ENCODE measurements at regions of chr1 and their contacts with region 1.

Region 1: GRCh38 chr1:220786337-220787068 is at the start of gene MTARC1:
- DNase-seq: peak; percentile 86
- ATAC-seq: peak; percentile 93
- H3K4me3 ChIP-seq: peak within 1 kb of the TSS; percentile 60 to 79 (median 64)
- H3K27ac ChIP-seq: peak within 1 kb of the TSS; percentile 96
- H3K4me1 ChIP-seq: peaks cover 40% of the 10 kb centered on the region
- H3K27me3 ChIP-seq: no peaks in the 10 kb centered on the region
- CTCF ChIP-seq: peak; percentile 33; the same call in 1 of the 2 replicates
- EP300 ChIP-seq: no peak
- POLR2A ChIP-seq: peak; percentile 56 to 86
- RAD21 ChIP-seq: peak; percentile 12; the same call in 1 of the 2 replicates
- total RNA-seq, gene MTARC1: 64.2 and 106 TPM in 2 replicates

Region 2: GRCh38 chr1:220272047-220272840 is 514.3 kb before region 1 on chr1 and contains the start of gene RAB3GAP2:
- CTCF ChIA-PET with region 1: no interaction called
- POLR2A ChIA-PET with region 1: no interaction called
- in situ Hi-C with region 1: loop called (anchors 10 kb)
- intact Hi-C with region 1: no loop called
- DNase-seq: peak; percentile 88
- ATAC-seq: peak; percentile 97
- H3K4me3 ChIP-seq: peak within 1 kb of the TSS; percentile 86 to 99 (median 96)
- H3K27ac ChIP-seq: peak within 1 kb of the TSS; percentile 78
- H3K4me1 ChIP-seq: peaks cover 35% of the 10 kb centered on the region
- H3K27me3 ChIP-seq: peaks cover 0 to 4% of the 10 kb centered on the region in 2 experiments; a peak in 2 of 5 replicates
- CTCF ChIP-seq: peak; percentile 8; the same call in 1 of the 2 replicates
- EP300 ChIP-seq: no peak
- POLR2A ChIP-seq: peak; percentile 88 to 91
- RAD21 ChIP-seq: 0 out of 2 replicates have a peak, but pooled peaks have one; percentile 18
- total RNA-seq, gene RAB3GAP2: 25.0 and 34.2 TPM in 2 replicates

Region 3: DNA sequence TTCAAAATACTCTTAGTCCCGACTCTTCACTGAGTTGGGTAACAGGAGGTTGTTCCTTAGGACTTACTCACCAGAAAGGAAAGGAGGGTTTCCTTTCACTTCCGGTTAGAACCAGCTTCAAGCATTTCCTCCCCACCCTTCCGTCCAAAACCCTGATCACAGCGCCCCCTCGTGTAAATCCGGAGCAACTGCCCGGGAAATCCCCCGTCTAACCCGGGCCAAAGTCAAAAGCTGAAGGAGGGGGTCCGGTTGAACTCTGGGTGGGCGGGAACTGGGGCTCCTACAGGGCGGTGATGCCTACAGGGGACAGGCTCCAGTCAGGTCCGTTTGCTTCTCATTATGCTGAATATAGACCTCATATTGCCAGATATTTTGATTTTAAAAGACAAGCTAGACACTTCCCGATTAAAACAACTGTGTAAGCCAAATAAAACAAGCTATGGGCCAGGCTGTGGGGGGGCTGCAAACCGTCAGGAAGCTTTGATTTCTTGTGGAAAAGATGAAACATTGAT is 53.4 kb before region 1 on chr1:
- CTCF ChIA-PET with region 1: no interaction called
- POLR2A ChIA-PET with region 1: interaction called, 14 read pairs
- in situ Hi-C with region 1: no loop called
- intact Hi-C with region 1: no loop called
- DNase-seq: peak; percentile 77
- ATAC-seq: peak; percentile 79
- H3K4me3 ChIP-seq: peak overlapping the region in 2 of 3 experiments; percentile 43 to 52; a peak in 3 of 6 replicates
- H3K27ac ChIP-seq: no peak overlapping the region
- H3K4me1 ChIP-seq: peaks cover 31% of the 10 kb centered on the region
- H3K27me3 ChIP-seq: no peaks in the 10 kb centered on the region
- CTCF ChIP-seq: peak; percentile 91
- EP300 ChIP-seq: 0 out of 4 replicates have a peak, but pooled peaks of 1 of the 2 experiments have one; percentile 9
- POLR2A ChIP-seq: no peak
- RAD21 ChIP-seq: peak; percentile 83

Region 4: GRCh38 chr1:220767312-220768125 is 19.0 kb before region 1 on chr1:
- CTCF ChIA-PET with region 1: no interaction called
- POLR2A ChIA-PET with region 1: interaction called, 17 read pairs
- in situ Hi-C with region 1: no loop called
- intact Hi-C with region 1: loop called (anchors 1 kb)
- DNase-seq: peak; percentile 78
- ATAC-seq: peak; percentile 93
- H3K4me3 ChIP-seq: peak overlapping the region; percentile 34 to 55 (median 34); a peak in 5 of 6 replicates
- H3K27ac ChIP-seq: peak overlapping the region; percentile 87
- H3K4me1 ChIP-seq: peaks cover 49% of the 10 kb centered on the region
- H3K27me3 ChIP-seq: no peaks in the 10 kb centered on the region
- CTCF ChIP-seq: no peak
- EP300 ChIP-seq: peak in 1 of 2 experiments; percentile 70; a peak in 2 of 4 replicates
- POLR2A ChIP-seq: no peak
- RAD21 ChIP-seq: no peak

Region 5: DNA sequence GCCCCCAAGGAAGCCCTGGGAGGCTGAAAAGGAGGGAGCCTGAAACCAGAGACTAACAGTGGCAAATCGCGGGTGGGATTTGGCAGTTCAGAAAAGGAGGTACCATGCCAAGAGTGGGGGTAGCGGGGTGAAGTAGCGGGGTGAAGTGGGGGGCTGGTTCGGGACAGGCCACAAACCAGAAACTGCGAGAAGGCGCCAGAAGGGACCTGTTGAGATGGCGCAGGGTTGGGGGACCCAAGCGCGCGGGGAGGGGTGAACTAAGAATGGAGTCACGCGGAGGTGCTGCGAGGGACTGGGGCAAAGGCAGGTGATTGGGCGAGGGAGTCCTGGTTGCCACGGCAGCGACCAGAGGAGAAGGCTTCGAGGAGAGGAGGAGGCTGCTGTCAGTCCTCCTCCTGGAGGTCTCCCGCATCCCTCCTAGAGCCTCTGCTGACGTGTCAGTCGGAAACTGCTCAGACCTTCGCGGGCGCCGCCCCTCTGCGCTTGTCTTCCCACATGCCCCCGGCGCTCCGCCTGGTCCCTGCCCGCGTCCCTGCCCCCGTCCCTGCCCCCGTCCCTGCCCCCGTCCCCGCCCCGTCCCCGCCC is 1831.0 kb after region 1 on chr1:
- CTCF ChIA-PET with region 1: no interaction called
- POLR2A ChIA-PET with region 1: no interaction called
- in situ Hi-C with region 1: no loop called
- intact Hi-C with region 1: loop called (anchors 5 kb)
- DNase-seq: peak; percentile 77
- ATAC-seq: peak; percentile 89
- H3K4me3 ChIP-seq: peak overlapping the region; percentile 33 to 74 (median 57); a peak in 5 of 6 replicates
- H3K27ac ChIP-seq: no peak overlapping the region
- H3K4me1 ChIP-seq: peaks cover 38% of the 10 kb centered on the region
- H3K27me3 ChIP-seq: no peaks in the 10 kb centered on the region; a peak in 1 of 5 replicates
- CTCF ChIP-seq: no peak
- EP300 ChIP-seq: no peak
- POLR2A ChIP-seq: peak; percentile 53 to 61; a peak in 3 of 4 replicates
- RAD21 ChIP-seq: no peak

Measured in HepG2 (cell line).